ENCODE measurements at regions of chr4 and their contacts with region 1.

Region 1: DNA sequence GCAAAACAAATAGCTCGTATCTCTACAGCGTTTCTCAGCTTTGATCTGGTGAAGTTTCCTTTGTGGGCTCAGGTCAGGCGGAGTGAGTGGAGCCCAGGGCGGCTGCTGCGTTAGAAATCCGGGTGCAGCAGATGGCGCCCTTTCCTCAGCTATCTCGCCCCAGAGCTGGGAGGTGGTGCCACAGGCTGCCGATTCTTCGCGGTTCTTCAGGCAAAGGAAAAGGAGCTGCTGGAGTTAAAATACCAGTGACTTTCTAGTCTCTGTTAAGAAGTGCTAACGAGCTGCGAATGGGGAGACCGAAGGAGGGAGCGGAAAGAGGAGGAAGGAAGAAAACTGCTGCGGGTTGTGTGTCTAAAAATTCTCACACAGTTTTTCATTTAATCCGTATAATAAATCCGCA is 114.6 kb downstream of the CPE start:
- DNase-seq: peak; percentile 74 to 88
- H3K4me3 ChIP-seq: peak overlapping the region in 1 of 4 experiments; percentile 25; a peak in 1 of 8 replicates
- H3K27ac ChIP-seq: no peak overlapping the region
- H3K4me1 ChIP-seq: peaks cover 0 to 2% (median 0%) of the 10 kb centered on the region in 4 experiments; a peak in 1 of 7 replicates
- H3K27me3 ChIP-seq: peaks cover 0 to 1% (median 0%) of the 10 kb centered on the region in 4 experiments; a peak in 1 of 7 replicates
- CTCF ChIP-seq: peak; percentile 79 to 85 (median 83)
- EP300 ChIP-seq: 0 out of 3 replicates have a peak, but pooled peaks of 1 of the 2 experiments have one; percentile 31
- POLR2A ChIP-seq: no peak
- RAD21 ChIP-seq: peak; percentile 98 to 99

Region 2: DNA sequence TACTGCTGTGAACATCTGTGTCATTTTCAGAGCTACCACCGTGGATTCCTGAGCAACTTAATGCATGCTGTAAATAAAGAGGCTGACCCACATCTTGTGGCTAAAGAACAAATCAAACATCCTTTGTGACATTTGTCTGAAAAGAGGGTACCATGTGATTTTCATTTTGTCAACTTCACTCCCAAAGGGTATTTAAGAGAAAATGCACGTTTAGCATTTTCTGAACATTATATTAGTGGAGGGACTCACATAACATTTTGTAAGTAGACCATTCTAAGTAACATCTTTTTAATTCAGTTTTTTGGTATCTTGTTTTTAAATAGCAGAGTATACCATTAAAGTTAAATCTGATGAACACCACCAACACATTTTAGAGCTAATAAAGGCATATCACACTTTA is 131.6 kb before region 1 on chr4:
- CTCF ChIA-PET with region 1: no interaction called
- POLR2A ChIA-PET with region 1: no interaction called
- DNase-seq: no peak
- H3K4me3 ChIP-seq: no peak overlapping the region
- H3K27ac ChIP-seq: no peak overlapping the region
- H3K4me1 ChIP-seq: no peaks in the 10 kb centered on the region
- H3K27me3 ChIP-seq: no peaks in the 10 kb centered on the region
- CTCF ChIP-seq: no peak
- EP300 ChIP-seq: no peak
- POLR2A ChIP-seq: no peak
- RAD21 ChIP-seq: no peak

Region 3: GRCh38 chr4:165537028-165537648 is 43.8 kb after region 1 on chr4:
- CTCF ChIA-PET with region 1: interaction called, 21 read pairs
- POLR2A ChIA-PET with region 1: no interaction called
- DNase-seq: peak in 1 of 2 experiments; percentile 3
- H3K4me3 ChIP-seq: no peak overlapping the region
- H3K27ac ChIP-seq: no peak overlapping the region
- H3K4me1 ChIP-seq: peaks cover 0 to 3% (median 0%) of the 10 kb centered on the region in 4 experiments; a peak in 1 of 7 replicates
- H3K27me3 ChIP-seq: no peaks in the 10 kb centered on the region
- CTCF ChIP-seq: peak in 2 of 3 experiments; percentile 47 to 51; a peak in 2 of 4 replicates
- EP300 ChIP-seq: no peak
- POLR2A ChIP-seq: no peak
- RAD21 ChIP-seq: peak; percentile 81 to 88

Region 4: DNA sequence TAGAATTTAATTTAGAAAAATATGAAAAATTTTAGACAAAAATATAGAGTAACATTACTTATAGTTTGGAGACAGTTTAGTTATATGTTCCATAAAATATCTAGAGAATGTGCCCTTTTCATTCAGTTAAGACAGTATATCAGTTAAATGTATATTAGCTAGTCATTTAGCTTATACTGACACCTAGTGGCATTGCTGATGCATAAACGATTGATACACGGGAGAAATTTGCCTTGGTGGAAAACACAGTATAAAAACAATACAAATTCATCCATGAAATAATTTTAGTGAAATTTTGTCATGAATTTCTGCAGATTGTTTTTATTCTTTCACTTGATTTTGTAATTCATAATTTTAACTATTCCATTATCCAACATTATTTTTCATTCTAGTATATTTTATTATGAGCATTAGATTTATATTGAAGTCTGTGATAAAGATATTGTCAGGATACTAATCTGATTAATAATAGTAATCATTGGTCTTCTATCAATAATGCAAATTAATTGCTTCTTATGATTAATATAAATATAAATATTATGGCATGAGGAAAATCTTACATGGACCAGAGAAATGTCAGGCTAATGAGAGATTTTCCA is 598.7 kb after region 1 on chr4:
- CTCF ChIA-PET with region 1: interaction called, 22 read pairs
- POLR2A ChIA-PET with region 1: no interaction called
- DNase-seq: no peak
- H3K4me3 ChIP-seq: no peak overlapping the region
- H3K27ac ChIP-seq: no peak overlapping the region
- H3K4me1 ChIP-seq: no peaks in the 10 kb centered on the region
- H3K27me3 ChIP-seq: no peaks in the 10 kb centered on the region
- CTCF ChIP-seq: peak in 2 of 3 experiments; percentile 43 to 52; a peak in 2 of 4 replicates
- EP300 ChIP-seq: no peak
- POLR2A ChIP-seq: no peak
- RAD21 ChIP-seq: peak; percentile 76 to 84